ENCODE measurements at regions of chr17 and their contacts with region 1.

Region 1: GRCh38 chr17:56786989-56787482 is 46.7 kb downstream of the C17orf67 start:
- DNase-seq: peak; percentile 97
- H3K4me3 Mint-ChIP-seq: peak overlapping the region; percentile 61
- H3K27ac Mint-ChIP-seq: peak overlapping the region; percentile 96
- H3K4me1 Mint-ChIP-seq: peaks cover 40% of the 10 kb centered on the region
- H3K27me3 Mint-ChIP-seq: no peaks in the 10 kb centered on the region
- CTCF ChIP-seq: no peak

Region 2: GRCh38 chr17:56358651-56359050 is 428.4 kb before region 1 on chr17:
- CTCF ChIA-PET with region 1: no interaction called
- POLR2A ChIA-PET with region 1: no interaction called
- intact Hi-C with region 1: no loop called
- DNase-seq: peak; percentile 20
- H3K4me3 Mint-ChIP-seq: no peak overlapping the region
- H3K27ac Mint-ChIP-seq: peak overlapping the region; percentile 79
- H3K4me1 Mint-ChIP-seq: peaks cover 14% of the 10 kb centered on the region
- H3K27me3 Mint-ChIP-seq: no peaks in the 10 kb centered on the region
- CTCF ChIP-seq: no peak

Region 3: GRCh38 chr17:56833809-56834379 is 46.9 kb after region 1 on chr17 and contains the starts of genes C17orf67 and DGKE:
- CTCF ChIA-PET with region 1: interaction called, 4 read pairs
- POLR2A ChIA-PET with region 1: interaction called, 75 read pairs
- intact Hi-C with region 1: no loop called
- DNase-seq: peak; percentile 96
- H3K4me3 Mint-ChIP-seq: peak within 1 kb of the TSS; percentile 97
- H3K27ac Mint-ChIP-seq: peak within 1 kb of the TSS; percentile 66
- H3K4me1 Mint-ChIP-seq: peaks cover 47% of the 10 kb centered on the region
- H3K27me3 Mint-ChIP-seq: no peaks in the 10 kb centered on the region
- CTCF ChIP-seq: no peak
- total RNA-seq, gene C17orf67: 3.3 and 3.5 TPM in 2 replicates
- total RNA-seq, gene DGKE: 16.5 and 23.9 TPM in 2 replicates

Region 4: DNA sequence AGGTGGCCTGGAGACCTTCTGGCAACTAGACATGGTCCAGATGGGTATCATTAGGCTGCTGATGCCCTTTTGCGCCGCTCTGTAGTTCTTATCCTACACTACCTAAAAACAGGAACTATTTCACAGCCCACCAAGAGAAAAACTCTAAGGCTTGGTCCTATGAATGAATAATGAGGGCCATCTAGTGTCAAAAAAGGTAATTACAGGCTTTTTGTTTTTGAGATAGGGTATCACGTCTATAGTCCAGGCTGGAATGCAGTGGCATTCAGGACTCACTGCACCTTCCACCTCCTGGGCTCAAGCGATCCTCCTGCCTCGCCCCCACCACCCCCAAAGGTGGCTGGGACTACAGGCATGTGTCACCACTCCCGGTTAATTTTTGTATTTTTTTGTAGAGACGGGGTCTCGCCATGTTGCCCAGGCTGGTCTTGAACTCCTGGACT is 152.9 kb after region 1 on chr17:
- CTCF ChIA-PET with region 1: no interaction called
- POLR2A ChIA-PET with region 1: no interaction called
- intact Hi-C with region 1: no loop called
- DNase-seq: peak; percentile 71
- H3K4me3 Mint-ChIP-seq: no peak overlapping the region
- H3K27ac Mint-ChIP-seq: no peak overlapping the region
- H3K4me1 Mint-ChIP-seq: peaks cover 15% of the 10 kb centered on the region
- H3K27me3 Mint-ChIP-seq: no peaks in the 10 kb centered on the region
- CTCF ChIP-seq: peak; percentile 84